GM12878 (cell line): ENCODE measurements at regions of chr18 and their contacts with region 1.

Region 1: DNA sequence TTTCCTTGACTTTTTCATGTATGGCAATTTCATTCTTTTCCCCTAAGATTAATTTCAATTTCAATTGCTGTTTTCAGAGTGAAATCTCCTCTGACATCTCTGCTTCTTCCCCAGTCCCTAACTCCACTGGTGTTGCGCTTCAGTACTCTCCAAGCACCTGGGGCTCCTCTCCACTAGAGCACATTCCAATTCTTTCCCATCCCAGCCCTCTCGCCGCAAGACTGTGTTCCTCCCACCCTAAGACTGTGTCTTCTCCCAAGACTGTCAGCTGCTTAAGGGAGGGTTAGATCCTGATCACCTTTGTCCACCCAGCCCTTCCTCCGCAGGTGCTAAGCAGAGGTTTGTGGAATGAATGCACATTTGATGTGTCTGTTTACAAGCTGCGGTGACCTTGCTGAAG is 255.7 kb upstream of the CCDC68 start:
- DNase-seq: no peak
- ATAC-seq: no peak
- H3K4me3 ChIP-seq: no peak overlapping the region
- H3K27ac ChIP-seq: no peak overlapping the region
- H3K4me1 ChIP-seq: peaks cover under 1% of the 10 kb centered on the region; the same call in 1 of the 2 replicates
- H3K27me3 ChIP-seq: no peaks in the 10 kb centered on the region
- CTCF ChIP-seq: no peak
- EP300 ChIP-seq: no peak
- POLR2A ChIP-seq: no peak
- RAD21 ChIP-seq: no peak

Region 2: DNA sequence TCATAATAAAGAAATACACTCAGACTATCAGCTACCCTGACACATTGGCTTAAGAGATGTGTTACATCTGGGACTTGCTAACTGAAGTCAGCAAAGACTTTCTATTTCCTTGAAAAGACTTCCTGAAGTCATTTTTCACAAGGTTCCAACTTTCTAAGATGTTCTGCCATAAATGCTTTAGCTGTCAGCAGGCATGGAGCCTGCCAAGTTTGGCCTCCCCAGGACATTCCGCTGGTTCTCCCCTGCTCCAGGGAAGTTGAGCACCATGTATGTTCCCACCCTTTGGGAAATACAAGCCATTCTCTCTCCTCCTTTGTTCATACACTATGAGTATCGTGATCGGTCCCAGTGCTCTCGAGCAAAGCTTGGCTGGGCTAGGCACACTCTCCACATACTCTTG is 53.1 kb before region 1 on chr18:
- CTCF ChIA-PET with region 1: no interaction called
- POLR2A ChIA-PET with region 1: no interaction called
- RAD21 ChIA-PET with region 1: no interaction called
- SMC1A ChIA-PET with region 1: no interaction called
- in situ Hi-C with region 1: loop called (anchors 5 kb)
- intact Hi-C with region 1: no loop called
- DNase-seq: no peak
- ATAC-seq: no peak
- H3K4me3 ChIP-seq: no peak overlapping the region
- H3K27ac ChIP-seq: no peak overlapping the region
- H3K4me1 ChIP-seq: no peaks in the 10 kb centered on the region
- H3K27me3 ChIP-seq: peaks cover 0 to 2% of the 10 kb centered on the region in 2 experiments; a peak in 1 of 4 replicates
- CTCF ChIP-seq: no peak
- EP300 ChIP-seq: no peak
- POLR2A ChIP-seq: no peak
- RAD21 ChIP-seq: no peak

Region 3: DNA sequence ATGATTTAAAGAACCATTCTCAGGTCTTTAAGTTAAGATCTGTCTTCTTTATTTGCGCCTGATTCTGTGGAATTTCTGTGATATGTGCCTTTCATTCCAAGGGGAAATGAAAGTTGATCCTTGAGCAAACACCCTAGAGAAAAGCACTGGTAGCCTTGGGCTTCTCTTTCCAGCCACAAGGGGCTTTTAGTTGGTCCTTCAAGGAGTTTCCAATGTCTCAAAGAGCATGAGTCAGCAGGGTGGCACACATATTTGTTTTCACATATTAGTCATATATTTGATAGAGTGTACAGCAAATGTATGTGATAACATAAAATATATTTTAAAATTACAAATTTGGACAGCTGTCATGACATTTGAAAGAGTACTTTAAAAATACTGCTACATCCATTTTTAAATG is 1084.0 kb after region 1 on chr18:
- CTCF ChIA-PET with region 1: no interaction called
- POLR2A ChIA-PET with region 1: no interaction called
- RAD21 ChIA-PET with region 1: no interaction called
- SMC1A ChIA-PET with region 1: no interaction called
- in situ Hi-C with region 1: no loop called
- intact Hi-C with region 1: no loop called
- DNase-seq: no peak
- ATAC-seq: peak; percentile 48; the same call in 1 of the 3 replicates
- H3K4me3 ChIP-seq: no peak overlapping the region
- H3K27ac ChIP-seq: no peak overlapping the region
- H3K4me1 ChIP-seq: no peaks in the 10 kb centered on the region; the same call in 1 of the 2 replicates
- H3K27me3 ChIP-seq: no peaks in the 10 kb centered on the region
- CTCF ChIP-seq: no peak
- EP300 ChIP-seq: no peak
- POLR2A ChIP-seq: no peak
- RAD21 ChIP-seq: no peak